PC-3 (cell line): ENCODE measurements at regions of chr15 and their contacts with region 1.

Region 1: GRCh38 chr15:71011503-71012155 is 103.6 kb upstream of the THSD4 start:
- DNase-seq: peak; percentile 82
- ATAC-seq: peak; percentile 87
- H3K4me3 ChIP-seq: no peak overlapping the region
- H3K27ac ChIP-seq: peak overlapping the region; percentile 34
- H3K4me1 ChIP-seq: peaks cover 15% of the 10 kb centered on the region
- H3K27me3 ChIP-seq: no peaks in the 10 kb centered on the region
- CTCF ChIP-seq: peak; percentile 93

Region 2: DNA sequence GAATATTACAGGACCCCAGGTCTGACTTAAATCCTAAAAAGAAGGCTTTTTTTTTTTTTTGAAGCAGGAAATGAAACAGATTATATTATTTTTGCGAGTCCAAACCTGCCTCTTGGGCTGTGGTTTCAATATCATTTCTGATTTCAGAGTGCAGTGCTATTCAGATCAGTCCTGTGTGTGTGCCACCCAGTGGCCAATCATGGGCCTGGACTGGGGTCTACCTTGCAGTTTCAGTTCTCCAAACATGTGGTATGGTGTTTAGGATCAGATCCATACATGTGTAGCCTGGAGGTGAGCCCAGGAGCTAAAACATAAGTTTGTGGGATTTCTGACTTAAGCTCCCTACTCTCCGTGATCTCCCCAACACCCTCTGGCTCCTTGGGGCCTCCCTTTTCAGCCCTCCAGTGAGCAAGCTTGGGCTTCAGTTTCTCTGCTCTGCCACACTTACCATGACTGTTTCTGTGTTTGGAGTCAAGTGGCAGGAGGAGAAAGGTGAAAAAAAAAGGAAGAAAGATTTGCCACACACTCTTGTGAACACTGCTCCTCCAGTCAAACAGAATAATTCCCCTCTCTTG is 91.6 kb after region 1 on chr15:
- CTCF ChIA-PET with region 1: no interaction called
- POLR2A ChIA-PET with region 1: no interaction called
- intact Hi-C with region 1: loop called (anchors 1 kb)
- DNase-seq: peak; percentile 57
- ATAC-seq: peak; percentile 84
- H3K4me3 ChIP-seq: no peak overlapping the region
- H3K27ac ChIP-seq: no peak overlapping the region
- H3K4me1 ChIP-seq: peaks cover 14% of the 10 kb centered on the region
- H3K27me3 ChIP-seq: no peaks in the 10 kb centered on the region
- CTCF ChIP-seq: peak; percentile 66